PC-9 (cell line): ENCODE measurements at regions of chr1 and their contacts with region 1.

Region 1: GRCh38 chr1:203381151-203381751 is 30.3 kb upstream of the FMOD start:
- DNase-seq: no peak
- H3K4me3 ChIP-seq: no peak overlapping the region
- H3K27ac ChIP-seq: no peak overlapping the region
- H3K4me1 ChIP-seq: no peaks in the 10 kb centered on the region
- H3K27me3 ChIP-seq: peaks cover 74% of the 10 kb centered on the region
- CTCF ChIP-seq: no peak

Region 2: DNA sequence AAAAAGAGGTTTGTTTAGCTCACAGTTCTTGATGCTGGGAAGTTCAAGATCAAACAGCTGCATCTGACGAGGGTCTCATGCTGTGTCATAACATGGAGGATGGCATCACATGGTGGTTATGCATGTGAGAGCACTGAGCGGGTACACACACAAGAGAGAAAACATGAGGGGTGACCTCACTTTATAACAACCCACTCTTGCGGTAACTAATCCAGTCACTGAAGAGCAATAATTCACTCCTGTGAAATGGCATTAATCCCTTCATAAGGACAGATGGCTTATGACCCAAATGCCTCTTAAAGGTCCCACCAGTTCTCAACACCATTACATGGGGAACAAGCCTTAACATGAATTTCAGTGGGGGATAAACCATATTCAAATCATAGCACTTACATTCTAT is 128.6 kb before region 1 on chr1:
- CTCF ChIA-PET with region 1: no interaction called
- POLR2A ChIA-PET with region 1: no interaction called
- intact Hi-C with region 1: no loop called
- DNase-seq: no peak
- H3K4me3 ChIP-seq: no peak overlapping the region
- H3K27ac ChIP-seq: no peak overlapping the region
- H3K4me1 ChIP-seq: no peaks in the 10 kb centered on the region
- H3K27me3 ChIP-seq: peaks cover 62% of the 10 kb centered on the region
- CTCF ChIP-seq: no peak

Region 3: GRCh38 chr1:203410182-203410933 is 29.1 kb after region 1 on chr1:
- CTCF ChIA-PET with region 1: interaction called, 13 read pairs
- POLR2A ChIA-PET with region 1: no interaction called
- intact Hi-C with region 1: no loop called
- DNase-seq: no peak
- H3K4me3 ChIP-seq: no peak overlapping the region
- H3K27ac ChIP-seq: no peak overlapping the region
- H3K4me1 ChIP-seq: peaks cover 5% of the 10 kb centered on the region; the same call in 1 of the 2 replicates
- H3K27me3 ChIP-seq: peaks cover 66% of the 10 kb centered on the region
- CTCF ChIP-seq: no peak

Region 4: DNA sequence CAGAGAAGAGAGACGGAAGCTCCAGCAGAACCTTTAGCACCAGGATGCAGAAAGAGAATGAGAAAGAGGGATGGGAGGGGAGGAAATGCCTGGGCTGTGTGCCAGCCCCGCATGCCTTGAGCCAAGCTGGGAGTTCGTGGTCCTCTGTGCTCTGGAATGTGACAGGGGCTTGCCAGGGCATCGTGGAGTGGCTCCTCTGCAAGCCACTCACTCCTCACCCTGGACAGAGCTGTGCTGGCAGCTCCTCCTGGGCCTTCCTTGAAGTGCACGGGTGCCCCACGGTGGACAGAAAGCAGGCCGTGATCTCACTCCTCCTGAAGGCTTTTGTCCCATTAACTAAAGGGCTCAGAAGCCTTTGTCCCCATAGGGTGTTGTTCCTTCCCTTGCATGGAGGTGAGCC is 59.5 kb after region 1 on chr1:
- CTCF ChIA-PET with region 1: no interaction called
- POLR2A ChIA-PET with region 1: no interaction called
- intact Hi-C with region 1: loop called (anchors 10 kb)
- DNase-seq: peak in 1 of 2 experiments; percentile 20
- H3K4me3 ChIP-seq: no peak overlapping the region
- H3K27ac ChIP-seq: no peak overlapping the region
- H3K4me1 ChIP-seq: no peaks in the 10 kb centered on the region
- H3K27me3 ChIP-seq: peaks cover 93% of the 10 kb centered on the region
- CTCF ChIP-seq: 0 out of 2 replicates have a peak, but pooled peaks have one; percentile 21